HCT116 (cell line): ENCODE measurements at regions of chr19 and their contacts with region 1.

Region 1: DNA sequence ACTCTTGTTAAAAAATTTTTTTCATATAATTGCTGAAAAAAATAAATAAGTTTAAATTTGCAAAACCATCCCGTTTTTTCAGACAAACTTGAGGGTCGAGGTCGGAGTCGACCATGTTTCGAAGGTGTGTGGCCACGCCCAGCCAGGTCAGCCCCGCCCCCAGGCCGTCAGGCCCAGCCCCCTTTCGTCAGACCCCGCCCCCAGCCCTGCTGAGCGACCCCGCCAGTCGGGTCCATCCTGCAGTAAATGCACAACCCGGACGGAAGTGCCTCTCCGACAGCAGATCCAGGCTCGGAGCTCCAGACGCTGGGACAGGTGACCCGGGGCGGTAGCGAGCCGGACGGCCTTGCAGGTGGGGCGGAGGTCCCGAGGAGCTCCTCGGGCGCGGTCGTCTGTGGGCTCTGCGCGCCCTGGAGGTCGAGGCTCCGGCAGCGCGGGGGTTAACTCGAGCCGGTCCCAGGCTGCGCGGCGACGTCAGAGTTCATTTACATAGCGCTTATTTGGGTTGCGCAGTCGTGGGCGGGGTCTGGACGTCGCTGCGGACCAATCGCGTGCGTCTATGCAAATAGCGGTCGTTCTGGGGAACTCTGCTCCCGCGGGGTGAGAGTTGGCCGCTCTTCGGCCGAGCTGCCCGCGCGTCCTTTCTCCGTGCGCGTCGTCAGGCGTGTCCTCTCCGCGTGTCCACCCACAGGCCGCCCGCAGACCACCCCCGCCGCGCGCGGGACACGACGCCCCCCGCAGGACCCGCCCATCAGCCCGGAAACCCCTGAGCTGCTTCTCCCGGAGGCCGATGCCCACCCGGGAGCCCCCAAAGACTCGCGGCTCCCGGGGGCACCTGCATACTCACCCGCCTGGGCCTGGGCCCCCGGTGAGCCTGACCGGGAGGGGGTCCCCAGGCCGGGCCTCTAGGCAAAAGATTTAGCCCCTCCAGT is at the start of gene OCEL1:
- DNase-seq: peak; percentile 95
- ATAC-seq: peak; percentile 87
- H3K4me3 ChIP-seq: peak within 1 kb of the TSS; percentile 81 to 92
- H3K27ac ChIP-seq: peak within 1 kb of the TSS; percentile 85
- H3K4me1 ChIP-seq: peaks cover 14 to 38% of the 10 kb centered on the region in 2 experiments; a peak in 3 of 4 replicates
- H3K27me3 ChIP-seq: no peaks in the 10 kb centered on the region
- CTCF ChIP-seq: no peak
- POLR2A ChIP-seq: peak; percentile 77
- RAD21 ChIP-seq: no peak; the same call in 1 of the 2 replicates
- total RNA-seq, gene OCEL1: 39.8 TPM

Region 2: DNA sequence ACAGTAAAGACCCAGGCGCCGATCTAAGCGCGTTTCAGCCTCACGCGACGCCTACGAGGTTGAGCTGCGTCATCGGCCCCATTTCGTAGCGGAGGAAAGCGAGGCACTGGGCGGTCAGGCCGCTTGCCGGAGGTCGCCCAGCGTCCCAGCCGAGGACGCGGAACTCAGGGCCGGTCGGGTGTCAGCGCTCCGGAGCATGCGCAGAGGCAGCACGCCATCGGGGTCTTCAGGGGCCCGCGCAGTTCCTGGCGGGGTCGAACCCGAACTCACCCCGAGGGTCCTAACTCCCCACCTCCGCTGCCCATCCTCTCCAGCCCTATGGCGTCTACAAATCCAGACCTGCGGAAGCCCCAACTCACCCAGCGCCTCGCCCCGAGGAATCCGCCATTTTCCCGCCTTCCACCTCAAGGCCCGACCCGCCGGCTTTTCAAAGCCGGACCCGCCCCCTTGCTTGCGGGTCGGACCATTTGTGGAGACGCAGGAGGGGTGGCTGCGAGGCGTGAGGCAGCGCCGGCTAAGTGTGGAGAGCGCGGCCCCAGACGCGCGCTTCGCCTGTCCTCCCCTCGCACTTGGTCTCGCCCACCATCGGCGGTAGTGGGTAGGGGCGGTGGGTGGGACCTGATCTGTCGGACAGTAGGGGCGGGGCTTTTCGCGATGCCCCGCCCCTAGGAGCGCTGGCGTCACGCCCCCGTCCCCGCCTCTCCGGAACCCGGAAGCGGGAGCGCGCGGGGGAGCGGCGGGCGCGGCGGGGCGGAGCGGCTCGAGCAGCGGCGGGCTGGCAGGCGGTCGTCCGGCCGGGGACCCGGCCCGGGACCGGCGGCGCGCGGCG is 151.0 kb before region 1 on chr19 and contains the starts of genes HAUS8 and MYO9B:
- CTCF ChIA-PET with region 1: no interaction called
- POLR2A ChIA-PET with region 1: interaction called, 3 read pairs
- RAD21 ChIA-PET with region 1: no interaction called
- intact Hi-C with region 1: loop called (anchors 5 kb)
- DNase-seq: peak; percentile 98
- ATAC-seq: peak; percentile 93
- H3K4me3 ChIP-seq: peak within 1 kb of the TSS; percentile 71 to 91
- H3K27ac ChIP-seq: peak within 1 kb of the TSS; percentile 70
- H3K4me1 ChIP-seq: peaks cover 16 to 43% of the 10 kb centered on the region in 2 experiments
- H3K27me3 ChIP-seq: no peaks in the 10 kb centered on the region
- CTCF ChIP-seq: no peak
- POLR2A ChIP-seq: peak; percentile 46
- RAD21 ChIP-seq: no peak
- total RNA-seq, gene HAUS8: 23.6 TPM
- total RNA-seq, gene MYO9B: 74.6 TPM

Region 3: DNA sequence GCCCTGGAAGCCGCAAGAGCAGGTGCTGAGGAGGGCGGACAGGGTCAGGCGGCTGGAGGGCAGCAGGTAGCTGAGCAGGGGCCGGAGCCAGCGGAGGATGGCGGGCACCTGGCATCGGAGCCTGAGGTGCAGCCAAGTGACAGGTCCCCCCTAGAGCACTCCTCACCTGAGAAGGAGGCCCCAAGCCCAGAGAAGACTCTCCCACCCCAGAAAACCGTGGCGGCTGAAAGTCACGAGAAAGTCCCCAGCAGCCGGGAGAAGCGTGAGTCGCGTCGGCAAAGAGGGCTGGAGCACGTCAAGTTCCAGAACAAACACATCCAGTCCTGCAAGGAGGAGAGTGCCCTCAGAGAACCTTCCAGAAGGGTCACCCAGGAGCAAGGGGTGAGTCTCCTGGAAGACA is 31.7 kb before region 1 on chr19:
- CTCF ChIA-PET with region 1: no interaction called
- POLR2A ChIA-PET with region 1: no interaction called
- RAD21 ChIA-PET with region 1: no interaction called
- intact Hi-C with region 1: no loop called
- DNase-seq: no peak
- ATAC-seq: no peak
- H3K4me3 ChIP-seq: no peak overlapping the region
- H3K27ac ChIP-seq: no peak overlapping the region
- H3K4me1 ChIP-seq: no peaks in the 10 kb centered on the region
- H3K27me3 ChIP-seq: no peaks in the 10 kb centered on the region
- CTCF ChIP-seq: no peak
- POLR2A ChIP-seq: no peak
- RAD21 ChIP-seq: no peak

Region 4: DNA sequence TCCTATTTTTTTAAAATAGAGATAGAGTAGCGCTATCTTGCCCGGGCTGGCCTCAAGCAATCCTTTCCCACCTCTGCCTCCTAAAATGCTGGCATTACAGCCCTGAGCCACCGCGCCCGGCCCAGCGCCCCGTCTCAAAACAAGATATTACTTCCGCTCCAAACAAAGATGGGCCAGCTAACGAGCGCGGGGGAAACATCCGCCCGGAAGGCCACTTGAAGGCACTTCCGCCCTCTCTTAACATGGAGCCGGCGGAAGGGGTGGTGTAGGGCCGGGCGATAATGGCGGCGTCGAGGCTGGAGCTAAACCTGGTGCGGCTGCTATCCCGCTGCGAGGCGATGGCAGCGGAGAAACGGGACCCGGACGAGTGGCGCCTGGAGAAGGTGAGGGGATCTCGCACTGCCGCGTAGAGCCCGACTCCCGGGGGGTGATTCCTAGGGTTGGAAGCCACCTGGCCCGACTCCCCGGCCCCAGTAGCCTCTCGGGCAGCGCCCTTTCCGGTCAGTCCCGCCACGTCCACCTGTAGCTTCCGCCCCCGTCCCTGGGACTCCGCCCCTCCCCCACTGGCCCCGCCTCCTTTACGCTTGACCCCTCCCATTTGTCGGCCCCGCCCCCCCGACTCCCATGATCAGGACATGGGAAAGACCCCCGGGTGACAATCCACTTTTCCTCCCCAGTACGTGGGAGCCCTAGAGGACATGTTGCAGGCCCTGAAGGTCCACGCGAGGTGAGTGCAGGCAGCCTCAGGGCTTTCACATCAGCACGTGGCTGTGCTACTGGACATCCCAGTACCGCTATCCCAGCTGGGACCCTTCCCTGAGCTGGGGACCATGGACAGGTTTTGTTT is 10.9 kb before region 1 on chr19 and contains the start of gene USE1:
- CTCF ChIA-PET with region 1: no interaction called
- POLR2A ChIA-PET with region 1: interaction called, 24 read pairs
- RAD21 ChIA-PET with region 1: no interaction called
- intact Hi-C with region 1: no loop called
- DNase-seq: peak; percentile 84
- ATAC-seq: peak; percentile 89
- H3K4me3 ChIP-seq: peak within 1 kb of the TSS; percentile 57 to 70
- H3K27ac ChIP-seq: peak within 1 kb of the TSS; percentile 89
- H3K4me1 ChIP-seq: peaks cover 9 to 30% of the 10 kb centered on the region in 2 experiments
- H3K27me3 ChIP-seq: no peaks in the 10 kb centered on the region
- CTCF ChIP-seq: no peak
- POLR2A ChIP-seq: peak; percentile 61
- RAD21 ChIP-seq: no peak
- total RNA-seq, gene USE1: 27.5 TPM

Region 5: GRCh38 chr19:17243990-17244385 is 17.7 kb after region 1 on chr19:
- CTCF ChIA-PET with region 1: no interaction called
- POLR2A ChIA-PET with region 1: interaction called, 9 read pairs
- RAD21 ChIA-PET with region 1: no interaction called
- intact Hi-C with region 1: loop called (anchors 1 kb)
- DNase-seq: no peak
- ATAC-seq: peak; percentile 15; the same call in 1 of the 2 replicates
- H3K4me3 ChIP-seq: peak overlapping the region; percentile 87 to 94
- H3K27ac ChIP-seq: peak overlapping the region; percentile 91
- H3K4me1 ChIP-seq: peaks cover 43 to 61% of the 10 kb centered on the region in 2 experiments
- H3K27me3 ChIP-seq: no peaks in the 10 kb centered on the region
- CTCF ChIP-seq: no peak
- POLR2A ChIP-seq: no peak
- RAD21 ChIP-seq: no peak